ENCODE measurements at regions of chr10 and their contacts with region 1.

Region 1: GRCh38 chr10:103367782-103368518 is at the start of gene TAF5:
- DNase-seq: peak; percentile 84 to 97 (median 93)

Region 2: GRCh38 chr10:103231047-103231551 is 136.9 kb before region 1 on chr10:
- intact Hi-C with region 1: no loop called
- DNase-seq: no peak

Region 3: GRCh38 chr10:103350501-103351260 is 17.3 kb before region 1 on chr10 and contains the start of gene PCGF6:
- intact Hi-C with region 1: loop called (anchors 1 kb)
- DNase-seq: peak; percentile 35 to 91 (median 82)